ENCODE measurements at regions of chr4 and their contacts with region 1.

Region 1: DNA sequence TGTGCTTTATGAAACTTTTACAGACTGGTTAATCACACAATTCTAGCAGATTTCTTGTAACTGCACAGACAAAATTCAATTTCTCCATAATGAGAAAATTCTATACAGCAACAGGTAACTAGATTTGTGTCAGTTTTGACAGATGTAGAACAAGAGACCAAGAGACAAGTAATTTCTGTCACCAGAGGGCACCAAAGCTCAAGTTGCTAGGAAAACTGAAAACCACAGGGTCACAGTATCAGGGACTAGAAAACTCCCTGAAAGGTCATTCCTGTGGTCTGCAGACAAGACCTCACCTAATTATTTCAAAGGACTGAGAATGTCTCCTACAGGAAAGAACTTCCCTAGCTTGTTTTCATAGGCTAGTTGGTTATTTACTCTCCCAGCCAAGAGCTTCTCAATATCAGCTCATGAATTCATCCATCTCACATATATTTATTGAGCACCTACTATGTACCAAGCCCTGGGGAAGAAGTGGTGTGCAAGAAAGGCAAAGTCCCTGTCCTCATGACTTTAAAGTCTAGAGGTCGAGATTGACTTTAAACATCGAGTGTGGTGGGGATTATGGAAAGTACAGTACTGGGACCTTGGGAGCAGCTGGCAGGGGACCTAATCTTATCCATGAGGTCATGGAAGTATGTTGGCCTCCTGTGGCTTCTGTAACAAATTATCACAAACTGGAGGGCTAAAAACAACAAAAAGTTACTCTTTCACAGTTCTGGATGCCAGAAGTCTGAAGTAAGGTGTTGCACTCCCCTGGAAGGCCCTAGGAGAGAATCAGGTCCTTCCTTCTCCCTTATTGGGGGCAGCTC is 47.8 kb upstream of the SETD7 start:
- DNase-seq: no peak
- ATAC-seq: peak; percentile 43 to 66 (median 62)
- H3K4me3 ChIP-seq: no peak overlapping the region
- H3K27ac ChIP-seq: no peak overlapping the region
- H3K4me1 ChIP-seq: no peaks in the 10 kb centered on the region
- H3K27me3 ChIP-seq: no peaks in the 10 kb centered on the region
- CTCF ChIP-seq: peak; percentile 68

Region 2: GRCh38 chr4:139651282-139652194 is 47.8 kb after region 1 on chr4:
- intact Hi-C with region 1: loop called (anchors 1 to 5 kb)
- DNase-seq: peak; percentile 83 to 88
- ATAC-seq: peak; percentile 70 to 93 (median 82)
- H3K4me3 ChIP-seq: no peak overlapping the region
- H3K27ac ChIP-seq: no peak overlapping the region
- H3K4me1 ChIP-seq: peaks cover 8% of the 10 kb centered on the region
- H3K27me3 ChIP-seq: no peaks in the 10 kb centered on the region
- CTCF ChIP-seq: peak; percentile 94

Region 3: DNA sequence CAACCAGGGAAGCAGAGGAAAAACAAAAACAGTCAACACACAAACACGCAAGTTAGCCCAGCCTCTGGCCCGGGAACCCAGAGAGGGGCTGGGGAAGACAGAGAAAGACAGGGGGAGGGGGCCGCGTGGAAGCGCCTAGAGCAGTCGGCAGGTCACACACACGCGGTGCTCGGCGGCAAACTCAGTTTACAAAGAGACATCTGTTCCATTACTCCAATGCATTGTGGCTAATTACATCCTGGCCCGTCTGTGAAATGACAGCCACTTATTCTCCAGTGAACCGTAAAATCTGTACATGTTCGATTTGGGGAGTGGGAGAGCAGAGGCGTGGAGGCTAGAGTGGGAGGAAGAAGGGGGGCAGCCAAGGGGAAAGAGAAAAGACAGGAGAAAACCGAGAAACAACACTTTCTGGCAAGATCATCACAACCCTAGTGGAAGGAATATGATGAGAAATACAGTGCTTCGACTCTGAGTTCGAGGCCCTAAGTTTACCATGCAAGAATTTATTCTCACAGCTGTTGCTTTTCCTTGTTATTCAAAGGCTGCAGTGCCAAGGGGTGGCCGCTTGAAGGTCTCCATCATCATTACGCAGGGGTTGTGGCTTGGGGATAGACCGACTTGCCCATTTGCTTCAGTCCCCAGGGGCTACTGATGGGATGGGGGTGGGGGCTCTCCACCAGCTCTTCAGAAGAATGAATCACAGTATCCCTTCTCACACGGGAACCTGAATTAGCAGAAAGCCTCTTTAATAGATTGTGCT is 229.5 kb after region 1 on chr4:
- intact Hi-C with region 1: no loop called
- DNase-seq: no peak
- ATAC-seq: no peak
- H3K4me3 ChIP-seq: no peak overlapping the region
- H3K27ac ChIP-seq: no peak overlapping the region
- H3K4me1 ChIP-seq: no peaks in the 10 kb centered on the region
- H3K27me3 ChIP-seq: no peaks in the 10 kb centered on the region
- CTCF ChIP-seq: no peak